GM13977 (cell line): ENCODE measurements at regions of chr19 and their contacts with region 1.

Region 1: DNA sequence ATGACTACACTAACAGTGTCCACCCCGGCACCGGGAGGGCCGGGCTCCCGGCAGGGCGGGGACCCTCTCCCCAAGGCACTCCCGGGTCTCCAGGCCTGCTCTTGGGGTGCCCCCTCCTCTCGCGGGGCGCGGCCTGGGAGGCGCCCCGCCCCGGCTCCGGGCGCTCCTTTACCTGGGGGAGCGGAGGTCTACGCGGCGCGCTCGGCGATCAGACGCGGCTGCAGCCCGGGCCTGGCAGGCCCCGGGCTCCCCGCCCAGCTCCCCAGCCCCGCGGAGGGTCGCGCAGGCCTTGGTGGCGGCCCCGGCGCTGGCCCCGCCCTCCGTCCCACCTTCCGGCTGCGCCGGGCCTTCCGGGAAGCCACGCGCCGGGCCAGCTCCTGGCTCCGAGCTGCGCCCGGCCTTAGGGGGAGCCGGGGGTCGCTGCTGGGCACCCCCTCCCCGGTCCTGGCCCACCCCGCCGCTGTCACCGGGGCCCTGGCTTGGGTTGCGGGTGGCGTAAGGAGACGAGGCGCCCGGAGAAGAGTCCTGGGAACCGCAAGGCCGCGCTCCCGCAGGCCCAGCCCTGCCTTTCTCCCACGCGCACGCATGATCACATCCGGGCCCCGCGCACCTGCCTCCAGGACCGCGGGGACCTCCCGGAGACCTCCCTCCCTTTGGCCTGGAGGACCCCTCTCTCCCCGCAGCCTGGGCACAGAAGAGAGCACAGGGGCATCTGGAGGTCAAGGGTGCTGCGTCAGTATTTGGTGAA is at the start of gene C19orf12:
- DNase-seq: peak; percentile 81
- CTCF ChIP-seq: no peak

Region 2: DNA sequence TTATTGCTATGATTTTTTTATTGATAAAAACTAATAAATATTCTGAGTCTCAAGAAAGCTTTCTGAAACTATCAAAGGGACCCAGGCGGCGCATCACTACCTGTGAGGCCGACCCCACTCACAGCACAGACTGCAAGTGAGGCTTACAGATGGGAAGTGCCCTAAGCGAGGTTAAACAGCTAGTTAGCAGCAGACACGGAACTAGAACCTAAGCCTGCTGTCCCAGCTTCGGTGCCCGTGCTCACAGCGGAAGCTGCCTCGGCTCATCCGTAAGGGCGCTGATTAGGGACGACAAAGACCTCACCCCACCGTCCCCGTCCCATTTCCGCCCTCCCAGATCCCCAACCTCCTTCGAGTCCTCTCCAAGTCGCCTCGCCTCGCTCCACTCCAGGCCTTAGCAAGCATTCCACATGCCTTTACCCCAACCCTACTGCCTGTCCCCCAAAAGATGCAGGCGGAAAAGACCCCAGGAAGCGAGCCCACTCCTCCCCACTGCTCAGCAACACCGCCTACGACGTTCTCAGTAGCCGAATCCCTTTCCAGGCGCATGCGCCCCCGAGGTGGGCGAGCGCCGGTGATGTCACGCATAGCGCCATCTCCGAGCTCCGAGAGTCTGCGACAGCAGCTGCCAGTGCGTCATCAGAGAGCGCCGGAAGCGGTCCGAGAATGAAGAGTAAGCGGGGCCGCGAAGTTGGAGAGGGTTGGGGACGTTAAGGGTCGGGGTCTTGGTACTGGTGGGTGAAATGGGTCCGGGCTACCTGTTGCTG is 109.3 kb before region 1 on chr19 and contains the start of gene POP4:
- in situ Hi-C with region 1: loop called (anchors 5 kb)
- DNase-seq: peak; percentile 96
- CTCF ChIP-seq: peak; percentile 7

Region 3: GRCh38 chr19:29819986-29820385 is 104.9 kb after region 1 on chr19:
- in situ Hi-C with region 1: no loop called
- DNase-seq: no peak
- CTCF ChIP-seq: no peak